ENCODE measurements at regions of chr10 and their contacts with region 1.

Region 1: DNA sequence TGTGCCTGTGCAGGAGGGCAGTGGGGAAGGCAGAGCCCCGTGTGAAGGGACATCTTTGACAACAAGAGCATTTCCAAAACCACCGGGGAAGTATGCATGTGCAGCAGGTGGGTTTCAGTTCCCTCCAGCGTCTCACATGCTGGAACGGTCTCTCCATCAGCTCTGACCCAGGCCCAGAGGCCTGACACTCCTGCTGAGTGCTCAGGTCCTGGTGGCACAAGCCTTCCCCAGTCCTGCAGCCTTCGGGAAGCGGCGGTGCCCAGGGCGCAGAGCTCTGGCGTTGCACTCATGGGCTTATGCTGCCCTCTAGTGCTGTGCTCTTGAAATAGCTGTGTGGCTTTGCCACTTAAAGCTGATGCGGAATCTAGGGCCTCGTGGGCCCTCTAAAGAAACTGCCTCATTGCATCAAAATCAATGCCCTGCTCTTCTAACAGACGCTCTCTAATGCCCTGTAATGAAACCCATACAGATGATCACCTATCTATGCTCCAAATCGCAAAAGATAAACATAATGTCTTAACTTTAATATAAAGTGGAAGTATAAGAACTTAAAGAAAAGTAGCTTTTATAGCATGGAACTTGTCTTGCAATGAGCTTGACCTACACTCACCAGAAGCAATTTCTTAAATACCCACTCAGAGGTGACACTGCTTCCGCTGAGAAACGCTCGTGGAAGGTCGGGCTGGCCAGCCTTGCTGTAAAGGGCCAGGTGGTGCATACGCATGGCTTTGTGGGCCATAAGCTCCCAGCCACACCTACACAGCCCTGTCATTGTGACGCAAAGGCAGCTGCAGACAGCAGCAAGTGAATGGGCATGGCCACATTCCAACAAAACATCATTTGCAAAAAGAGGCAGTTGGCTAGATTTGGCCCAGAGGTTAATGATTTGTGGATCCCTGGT is 38.6 kb downstream of the CLRN3 start:
- DNase-seq: peak; percentile 27
- ATAC-seq: peak; percentile 95
- H3K4me3 ChIP-seq: no peak overlapping the region
- H3K27ac ChIP-seq: no peak overlapping the region
- H3K4me1 ChIP-seq: no peaks in the 10 kb centered on the region
- H3K27me3 ChIP-seq: peaks cover 1 to 11% of the 10 kb centered on the region in 2 experiments; a peak in 2 of 5 replicates
- CTCF ChIP-seq: peak; percentile 89
- EP300 ChIP-seq: no peak
- POLR2A ChIP-seq: no peak
- RAD21 ChIP-seq: peak; percentile 84

Region 2: GRCh38 chr10:127243490-127244272 is 610.4 kb before region 1 on chr10:
- CTCF ChIA-PET with region 1: no interaction called
- POLR2A ChIA-PET with region 1: no interaction called
- in situ Hi-C with region 1: loop called (anchors 25 kb)
- intact Hi-C with region 1: no loop called
- DNase-seq: peak; percentile 46
- ATAC-seq: peak; percentile 96
- H3K4me3 ChIP-seq: no peak overlapping the region
- H3K27ac ChIP-seq: no peak overlapping the region
- H3K4me1 ChIP-seq: no peaks in the 10 kb centered on the region
- H3K27me3 ChIP-seq: no peaks in the 10 kb centered on the region
- CTCF ChIP-seq: peak; percentile 72
- EP300 ChIP-seq: no peak
- POLR2A ChIP-seq: no peak
- RAD21 ChIP-seq: peak; percentile 71; the same call in 1 of the 2 replicates

Region 3: GRCh38 chr10:127492607-127493250 is 361.4 kb before region 1 on chr10:
- CTCF ChIA-PET with region 1: no interaction called
- POLR2A ChIA-PET with region 1: no interaction called
- in situ Hi-C with region 1: no loop called
- intact Hi-C with region 1: loop called (anchors 2 kb)
- DNase-seq: no peak
- ATAC-seq: peak; percentile 99
- H3K4me3 ChIP-seq: no peak overlapping the region
- H3K27ac ChIP-seq: no peak overlapping the region
- H3K4me1 ChIP-seq: no peaks in the 10 kb centered on the region
- H3K27me3 ChIP-seq: peaks cover 1 to 31% of the 10 kb centered on the region in 2 experiments; a peak in 3 of 5 replicates
- CTCF ChIP-seq: peak; percentile 62
- EP300 ChIP-seq: no peak
- POLR2A ChIP-seq: no peak
- RAD21 ChIP-seq: no peak

Region 4: DNA sequence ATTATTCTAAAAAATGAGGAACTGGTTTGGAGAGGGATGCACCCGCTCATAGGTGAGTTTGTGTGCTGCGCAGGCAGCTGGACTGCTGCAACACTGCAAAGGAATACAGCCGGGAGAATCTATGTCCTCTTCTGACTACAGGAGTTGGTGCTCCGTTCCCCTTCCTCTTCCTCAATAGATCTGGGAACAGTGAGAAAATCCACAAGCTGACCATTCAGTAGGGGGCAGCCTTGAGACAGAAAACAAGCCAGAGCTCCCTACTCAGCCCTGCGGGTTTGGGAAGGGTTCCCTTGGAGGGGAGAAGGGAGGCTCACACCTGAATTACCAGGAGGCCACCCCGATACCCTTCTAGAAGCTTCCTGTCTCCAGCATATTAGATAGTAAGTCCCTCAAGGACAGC is 204.5 kb before region 1 on chr10:
- CTCF ChIA-PET with region 1: no interaction called
- POLR2A ChIA-PET with region 1: no interaction called
- in situ Hi-C with region 1: no loop called
- intact Hi-C with region 1: loop called (anchors 5 kb)
- DNase-seq: peak; percentile 14
- ATAC-seq: peak; percentile 33; the same call in 2 of the 3 replicates
- H3K4me3 ChIP-seq: no peak overlapping the region
- H3K27ac ChIP-seq: no peak overlapping the region
- H3K4me1 ChIP-seq: no peaks in the 10 kb centered on the region
- H3K27me3 ChIP-seq: no peaks in the 10 kb centered on the region
- CTCF ChIP-seq: peak; percentile 52
- EP300 ChIP-seq: no peak
- POLR2A ChIP-seq: no peak
- RAD21 ChIP-seq: no peak

Region 5: DNA sequence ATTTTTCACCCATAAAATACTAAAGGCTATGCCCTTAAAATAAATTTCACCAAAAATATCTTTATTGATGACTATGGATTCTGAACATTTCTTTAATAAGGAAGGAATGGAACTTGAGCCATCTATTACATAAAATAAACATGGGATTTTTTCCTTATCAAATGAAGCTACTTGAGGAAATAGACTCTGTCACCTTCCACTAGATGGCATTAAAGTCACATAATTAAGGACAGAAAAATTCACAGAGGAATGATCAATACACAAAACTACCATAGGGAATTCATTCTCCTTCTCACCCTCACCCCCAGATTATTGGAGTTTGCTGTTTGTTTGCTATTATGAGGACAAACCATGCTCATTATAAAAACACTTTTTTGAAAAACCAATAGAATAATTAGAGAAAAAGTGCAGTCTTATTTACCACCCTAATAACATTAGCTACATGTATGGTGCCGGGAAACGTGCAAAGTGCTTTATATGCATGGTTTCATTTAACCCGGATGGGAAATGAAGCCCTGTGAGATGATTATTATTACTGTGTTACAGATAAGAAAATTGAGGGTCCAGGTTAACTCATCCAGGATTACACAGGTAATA is 138.2 kb before region 1 on chr10:
- CTCF ChIA-PET with region 1: interaction called, 3 read pairs
- POLR2A ChIA-PET with region 1: no interaction called
- in situ Hi-C with region 1: loop called (anchors 5 kb)
- intact Hi-C with region 1: loop called (anchors 1 kb)
- DNase-seq: peak; percentile 39
- ATAC-seq: no peak
- H3K4me3 ChIP-seq: no peak overlapping the region
- H3K27ac ChIP-seq: no peak overlapping the region
- H3K4me1 ChIP-seq: no peaks in the 10 kb centered on the region
- H3K27me3 ChIP-seq: peaks cover 0 to 3% of the 10 kb centered on the region in 2 experiments; a peak in 2 of 5 replicates
- CTCF ChIP-seq: peak; percentile 48
- EP300 ChIP-seq: no peak
- POLR2A ChIP-seq: no peak
- RAD21 ChIP-seq: no peak

Region 6: GRCh38 chr10:127889605-127890195 is 35.6 kb after region 1 on chr10:
- CTCF ChIA-PET with region 1: no interaction called
- POLR2A ChIA-PET with region 1: no interaction called
- in situ Hi-C with region 1: no loop called
- intact Hi-C with region 1: no loop called
- DNase-seq: no peak
- ATAC-seq: no peak
- H3K4me3 ChIP-seq: no peak overlapping the region
- H3K27ac ChIP-seq: no peak overlapping the region
- H3K4me1 ChIP-seq: peaks cover 9% of the 10 kb centered on the region
- H3K27me3 ChIP-seq: peaks cover 0 to 1% of the 10 kb centered on the region in 2 experiments; a peak in 1 of 5 replicates
- CTCF ChIP-seq: no peak
- EP300 ChIP-seq: no peak
- POLR2A ChIP-seq: no peak
- RAD21 ChIP-seq: no peak